Activated CD4-positive, alpha-beta memory T cell treated with anti-CD3 and anti-CD28 coated beads for 36 hours (primary cell): ENCODE measurements at regions of chr2 and their contacts with region 1.

Region 1: GRCh38 chr2:148524519-148524919 is 120.0 kb upstream of the EPC2 start:
- DNase-seq: peak; percentile 83
- H3K4me3 Mint-ChIP-seq: peak overlapping the region; percentile 28
- H3K27ac Mint-ChIP-seq: peak overlapping the region; percentile 84
- H3K4me1 Mint-ChIP-seq: peaks cover 79% of the 10 kb centered on the region
- H3K27me3 Mint-ChIP-seq: no peaks in the 10 kb centered on the region

Region 2: DNA sequence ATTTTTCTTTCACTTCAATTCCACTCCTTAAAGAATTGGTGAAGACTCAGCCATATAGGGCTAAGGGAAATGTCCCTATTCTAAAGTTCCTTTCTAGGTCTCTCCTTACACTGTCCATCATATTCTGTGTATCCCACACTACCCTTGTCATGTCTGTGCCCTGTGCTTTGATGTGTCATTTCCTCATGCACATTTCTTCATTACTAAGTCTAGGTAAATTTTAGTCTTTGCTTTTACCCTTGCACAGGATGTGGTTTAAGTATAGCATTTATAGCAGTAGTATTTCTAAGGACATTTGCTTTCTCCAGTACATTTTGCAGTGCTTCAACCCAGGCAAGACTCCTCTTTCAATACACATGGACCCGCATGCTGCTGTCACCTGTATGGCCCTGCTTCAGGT is 901.2 kb before region 1 on chr2:
- CTCF ChIA-PET with region 1: no interaction called
- POLR2A ChIA-PET with region 1: no interaction called
- intact Hi-C with region 1: loop called (anchors 10 kb)
- DNase-seq: peak; percentile 15
- H3K4me3 Mint-ChIP-seq: peak overlapping the region; percentile 12
- H3K27ac Mint-ChIP-seq: peak overlapping the region; percentile 86
- H3K4me1 Mint-ChIP-seq: peaks cover 27% of the 10 kb centered on the region
- H3K27me3 Mint-ChIP-seq: no peaks in the 10 kb centered on the region

Region 3: DNA sequence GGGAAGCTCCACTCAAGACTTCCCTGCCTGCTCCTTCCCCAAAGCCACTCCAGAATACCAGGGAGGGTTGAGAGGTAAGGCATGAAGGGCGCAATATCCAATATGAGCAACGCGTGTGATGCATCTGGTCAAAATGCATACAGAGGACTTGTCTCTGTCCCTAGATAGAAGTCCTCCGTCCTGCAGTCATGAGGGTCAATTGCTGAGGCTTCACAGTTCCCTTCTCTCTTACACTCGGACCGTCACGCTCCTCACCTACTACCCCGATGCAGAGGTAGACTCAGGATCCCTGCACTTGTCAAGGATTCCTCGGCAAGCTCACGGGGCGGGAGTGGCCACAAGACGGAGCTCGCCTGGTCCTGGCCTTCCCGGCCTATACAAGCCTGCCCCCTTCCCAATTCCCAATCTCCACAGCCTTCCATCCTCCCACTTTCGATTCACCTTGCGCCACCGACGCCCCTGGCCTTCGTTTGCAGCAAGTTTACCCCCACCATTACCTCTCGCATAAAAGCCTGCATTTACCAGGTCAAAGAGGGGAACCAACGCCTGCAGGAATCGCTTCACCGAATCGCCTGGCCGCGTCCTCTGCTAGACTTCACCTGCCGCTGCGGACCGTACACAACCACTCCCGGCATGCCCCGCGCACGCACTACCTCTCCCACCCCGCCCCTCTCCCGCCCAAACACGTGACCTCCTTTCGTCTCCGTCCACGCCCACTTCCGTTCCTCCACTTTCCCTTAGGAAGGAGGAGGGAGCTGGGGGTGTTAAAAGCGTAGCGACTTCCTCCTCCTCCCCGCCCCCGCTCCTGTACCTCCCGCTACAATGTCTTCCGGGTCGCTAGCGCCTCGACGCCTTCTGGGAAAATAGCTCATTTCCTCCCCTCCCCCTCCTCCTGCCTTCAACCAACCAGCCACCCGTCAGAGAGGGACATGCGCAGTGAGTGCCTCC is 504.1 kb before region 1 on chr2 and contains the start of gene ORC4:
- CTCF ChIA-PET with region 1: no interaction called
- POLR2A ChIA-PET with region 1: no interaction called
- intact Hi-C with region 1: loop called (anchors 1 kb)
- DNase-seq: peak; percentile 99
- H3K4me3 Mint-ChIP-seq: peak within 1 kb of the TSS; percentile 100
- H3K27ac Mint-ChIP-seq: peak within 1 kb of the TSS; percentile 97
- H3K4me1 Mint-ChIP-seq: peaks cover 39% of the 10 kb centered on the region
- H3K27me3 Mint-ChIP-seq: no peaks in the 10 kb centered on the region
- total RNA-seq, gene ORC4: 34.1 to 34.9 TPM

Region 4: GRCh38 chr2:148540022-148540421 is 15.5 kb after region 1 on chr2:
- CTCF ChIA-PET with region 1: interaction called, 11 read pairs
- POLR2A ChIA-PET with region 1: interaction called, 3 read pairs
- intact Hi-C with region 1: loop called (anchors 1 kb)
- DNase-seq: peak; percentile 47
- H3K4me3 Mint-ChIP-seq: peak overlapping the region; percentile 22
- H3K27ac Mint-ChIP-seq: peak overlapping the region; percentile 69
- H3K4me1 Mint-ChIP-seq: peaks cover 26% of the 10 kb centered on the region
- H3K27me3 Mint-ChIP-seq: no peaks in the 10 kb centered on the region

Region 5: GRCh38 chr2:148552675-148553331 is 28.3 kb after region 1 on chr2:
- CTCF ChIA-PET with region 1: no interaction called
- POLR2A ChIA-PET with region 1: interaction called, 4 read pairs
- intact Hi-C with region 1: loop called (anchors 1 kb)
- DNase-seq: peak; percentile 36
- H3K4me3 Mint-ChIP-seq: no peak overlapping the region
- H3K27ac Mint-ChIP-seq: no peak overlapping the region
- H3K4me1 Mint-ChIP-seq: peaks cover 4% of the 10 kb centered on the region
- H3K27me3 Mint-ChIP-seq: no peaks in the 10 kb centered on the region

Region 6: DNA sequence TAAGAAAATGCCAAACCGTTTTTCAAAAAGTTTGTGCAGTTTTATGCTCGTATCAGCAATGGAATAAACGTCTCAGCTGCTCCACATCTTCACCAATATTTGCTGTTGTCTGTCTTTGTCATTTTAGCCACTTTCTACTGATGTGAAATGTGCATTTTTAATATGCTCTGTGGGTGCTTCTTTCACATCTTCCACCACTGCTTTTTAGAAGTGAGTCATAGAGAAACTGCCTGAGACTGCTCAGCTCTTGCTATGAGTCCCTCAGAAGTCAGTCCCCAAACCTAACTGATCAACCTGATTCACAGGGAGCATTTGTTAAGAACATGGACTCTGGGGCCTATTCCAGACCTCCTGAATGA is 79.0 kb after region 1 on chr2:
- CTCF ChIA-PET with region 1: interaction called, 6 read pairs
- POLR2A ChIA-PET with region 1: interaction called, 6 read pairs
- intact Hi-C with region 1: loop called (anchors 1 kb)
- DNase-seq: peak; percentile 45
- H3K4me3 Mint-ChIP-seq: no peak overlapping the region
- H3K27ac Mint-ChIP-seq: peak overlapping the region; percentile 87
- H3K4me1 Mint-ChIP-seq: peaks cover 14% of the 10 kb centered on the region
- H3K27me3 Mint-ChIP-seq: peaks cover 7% of the 10 kb centered on the region

Region 7: GRCh38 chr2:148874868-148875341 is 350.4 kb after region 1 on chr2 and contains the start of gene KIF5C:
- CTCF ChIA-PET with region 1: no interaction called
- POLR2A ChIA-PET with region 1: no interaction called
- intact Hi-C with region 1: loop called (anchors 1 kb)
- DNase-seq: peak; percentile 96
- H3K4me3 Mint-ChIP-seq: peak within 1 kb of the TSS; percentile 86
- H3K27ac Mint-ChIP-seq: peak within 1 kb of the TSS; percentile 38
- H3K4me1 Mint-ChIP-seq: peaks cover 13% of the 10 kb centered on the region
- H3K27me3 Mint-ChIP-seq: peaks cover 11% of the 10 kb centered on the region
- total RNA-seq, gene KIF5C: 25.2 to 30.8 TPM